HepG2 (cell line): ENCODE measurements at regions of chr12 and their contacts with region 1.

Region 1: DNA sequence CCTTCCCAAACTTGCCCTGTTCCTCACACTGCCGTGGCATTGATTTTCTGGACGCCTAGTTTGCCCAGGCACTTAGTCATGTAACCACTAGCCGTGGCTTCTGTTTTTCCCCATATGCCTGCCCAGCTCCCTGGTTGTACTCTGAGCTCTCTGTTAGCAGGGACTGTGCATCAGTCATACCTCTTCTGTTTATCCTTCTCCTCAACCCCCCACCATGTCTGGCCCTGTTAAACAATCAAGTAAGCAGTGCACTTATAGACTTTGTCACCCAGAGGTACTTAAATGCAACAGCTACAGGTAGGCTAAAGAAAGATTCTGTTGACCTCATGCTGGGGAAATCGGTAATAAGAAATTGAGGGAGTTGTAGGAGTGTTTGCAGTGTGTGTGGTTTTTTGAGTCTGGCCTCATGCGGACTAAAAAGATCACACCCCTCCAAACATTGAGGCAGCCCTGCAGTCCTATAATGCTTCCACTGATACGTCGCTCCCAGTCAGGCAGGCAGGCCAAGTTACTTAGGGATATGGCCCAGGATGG is 17.0 kb downstream of the UBE3B start:
- DNase-seq: peak; percentile 93
- ATAC-seq: peak; percentile 100
- H3K4me3 ChIP-seq: peak overlapping the region in 1 of 3 experiments; percentile 41; a peak in 1 of 6 replicates
- H3K27ac ChIP-seq: peak overlapping the region; percentile 77
- H3K4me1 ChIP-seq: peaks cover 26% of the 10 kb centered on the region
- H3K27me3 ChIP-seq: no peaks in the 10 kb centered on the region
- CTCF ChIP-seq: 0 out of 2 replicates have a peak, but pooled peaks have one; percentile 5
- EP300 ChIP-seq: peak in 1 of 2 experiments; percentile 66; a peak in 2 of 4 replicates
- POLR2A ChIP-seq: no peak
- RAD21 ChIP-seq: no peak

Region 2: GRCh38 chr12:109428037-109428629 is 66.3 kb before region 1 on chr12:
- CTCF ChIA-PET with region 1: no interaction called
- POLR2A ChIA-PET with region 1: no interaction called
- in situ Hi-C with region 1: no loop called
- intact Hi-C with region 1: loop called (anchors 1 kb)
- DNase-seq: peak; percentile 62
- ATAC-seq: peak; percentile 84
- H3K4me3 ChIP-seq: no peak overlapping the region
- H3K27ac ChIP-seq: no peak overlapping the region
- H3K4me1 ChIP-seq: peaks cover 15% of the 10 kb centered on the region
- H3K27me3 ChIP-seq: no peaks in the 10 kb centered on the region; a peak in 1 of 5 replicates
- CTCF ChIP-seq: peak; percentile 90
- EP300 ChIP-seq: no peak
- POLR2A ChIP-seq: no peak
- RAD21 ChIP-seq: peak; percentile 61

Region 3: GRCh38 chr12:109440851-109441493 is 53.4 kb before region 1 on chr12:
- CTCF ChIA-PET with region 1: no interaction called
- POLR2A ChIA-PET with region 1: no interaction called
- in situ Hi-C with region 1: no loop called
- intact Hi-C with region 1: no loop called
- DNase-seq: no peak
- ATAC-seq: no peak
- H3K4me3 ChIP-seq: no peak overlapping the region
- H3K27ac ChIP-seq: no peak overlapping the region
- H3K4me1 ChIP-seq: no peaks in the 10 kb centered on the region
- H3K27me3 ChIP-seq: no peaks in the 10 kb centered on the region
- CTCF ChIP-seq: no peak
- EP300 ChIP-seq: no peak
- POLR2A ChIP-seq: no peak
- RAD21 ChIP-seq: no peak

Region 4: DNA sequence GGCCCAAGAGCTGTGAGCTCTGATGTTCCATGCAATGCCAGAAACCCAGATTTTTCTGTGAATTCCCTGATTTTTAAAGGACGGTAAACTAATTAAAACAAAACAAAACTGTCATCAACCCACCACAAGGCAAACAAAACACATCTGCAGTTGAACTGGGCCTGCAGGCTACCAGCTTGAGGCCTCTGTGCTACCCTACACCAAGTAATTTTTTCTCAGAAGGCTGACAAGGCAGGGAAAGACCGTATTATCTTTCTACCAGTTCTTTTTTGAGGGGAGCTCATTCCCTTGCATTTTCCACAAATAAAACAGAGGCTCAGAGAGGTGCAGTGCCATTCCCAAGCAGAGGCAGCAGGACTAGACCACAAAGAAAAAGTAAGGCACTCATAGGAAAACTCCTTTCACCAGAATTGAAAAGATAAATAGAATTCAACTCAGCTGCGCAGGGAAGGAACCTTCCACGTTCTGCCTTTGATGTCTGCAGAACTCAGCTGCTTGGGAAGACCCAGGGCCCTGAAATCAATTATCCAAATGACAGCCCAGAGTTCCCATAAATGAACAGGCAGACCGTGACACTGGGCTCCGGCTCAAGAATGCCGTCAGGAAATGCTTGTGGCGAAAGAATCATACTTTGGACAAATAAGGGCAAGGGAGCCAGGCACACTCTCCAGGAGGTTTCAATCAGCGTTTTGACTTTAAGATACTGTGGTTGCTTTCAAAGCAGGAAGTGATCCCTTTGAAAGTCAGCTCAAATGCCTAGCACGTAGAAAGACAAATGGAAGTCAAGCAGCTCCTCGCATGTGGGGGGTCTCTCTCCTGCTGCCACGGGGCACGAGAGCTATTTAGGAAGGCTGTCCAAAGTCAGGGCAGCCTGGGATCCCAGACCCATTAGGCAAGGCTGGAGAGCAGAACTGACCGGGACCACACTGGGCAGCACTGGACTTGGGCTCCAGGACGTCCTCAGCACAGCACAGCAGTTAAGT is 31.4 kb before region 1 on chr12:
- CTCF ChIA-PET with region 1: no interaction called
- POLR2A ChIA-PET with region 1: interaction called, 11 read pairs
- in situ Hi-C with region 1: no loop called
- intact Hi-C with region 1: no loop called
- DNase-seq: peak; percentile 63
- ATAC-seq: peak; percentile 47
- H3K4me3 ChIP-seq: no peak overlapping the region
- H3K27ac ChIP-seq: peak overlapping the region; percentile 38
- H3K4me1 ChIP-seq: peaks cover 39% of the 10 kb centered on the region
- H3K27me3 ChIP-seq: no peaks in the 10 kb centered on the region
- CTCF ChIP-seq: no peak
- EP300 ChIP-seq: no peak
- POLR2A ChIP-seq: no peak
- RAD21 ChIP-seq: no peak

Region 5: DNA sequence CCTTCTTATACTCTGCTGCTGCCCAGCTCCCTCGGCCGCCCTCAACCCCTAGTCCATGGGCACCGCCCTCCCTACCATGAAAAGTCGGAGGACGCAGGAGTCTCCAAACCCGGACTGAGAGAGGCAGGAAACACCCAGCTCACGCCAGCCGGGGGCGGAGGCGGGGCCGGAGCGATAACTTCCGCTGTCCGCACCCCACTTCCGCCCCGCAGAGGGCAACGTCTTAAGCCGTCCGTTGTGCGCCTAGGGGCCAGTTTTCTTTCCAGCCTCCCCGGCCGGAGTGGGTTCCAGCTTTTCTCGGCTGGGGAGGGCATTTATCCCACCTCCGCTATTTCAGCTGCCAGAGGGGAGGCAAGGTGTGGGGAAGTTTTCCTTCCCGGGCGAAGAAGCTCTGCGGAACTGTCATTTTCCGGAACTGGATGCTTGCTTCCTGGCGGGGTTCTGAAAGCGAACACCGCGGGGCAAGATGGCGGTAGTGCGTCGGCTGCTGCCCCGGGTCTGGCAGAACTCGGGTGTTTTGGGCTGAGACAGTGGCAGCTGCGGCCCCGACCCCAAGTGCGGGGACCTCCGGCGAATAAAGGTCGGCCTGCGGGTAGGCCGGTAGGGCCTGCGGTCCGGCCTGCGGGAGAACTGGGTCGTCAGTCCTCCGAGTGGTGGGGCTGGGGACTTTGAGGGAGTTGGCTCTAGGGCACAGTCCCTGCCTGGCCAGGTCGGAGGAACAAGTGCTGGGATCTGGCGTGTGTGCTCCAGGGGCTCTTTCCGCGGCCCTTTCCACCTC is 17.0 kb before region 1 on chr12 and contains the starts of genes KCTD10 and UBE3B:
- CTCF ChIA-PET with region 1: no interaction called
- POLR2A ChIA-PET with region 1: interaction called, 18 read pairs
- in situ Hi-C with region 1: no loop called
- intact Hi-C with region 1: loop called (anchors 2 kb)
- DNase-seq: peak; percentile 72
- ATAC-seq: peak; percentile 96
- H3K4me3 ChIP-seq: peak within 1 kb of the TSS; percentile 95 to 98 (median 95)
- H3K27ac ChIP-seq: peak within 1 kb of the TSS; percentile 94
- H3K4me1 ChIP-seq: peaks cover 39% of the 10 kb centered on the region
- H3K27me3 ChIP-seq: no peaks in the 10 kb centered on the region; a peak in 1 of 5 replicates
- CTCF ChIP-seq: peak; percentile 12; the same call in 1 of the 2 replicates
- EP300 ChIP-seq: no peak
- POLR2A ChIP-seq: peak; percentile 67 to 71
- RAD21 ChIP-seq: no peak
- total RNA-seq, gene KCTD10: 6.9 and 12.5 TPM in 2 replicates
- total RNA-seq, gene UBE3B: 25.3 and 31.5 TPM in 2 replicates

Region 6: DNA sequence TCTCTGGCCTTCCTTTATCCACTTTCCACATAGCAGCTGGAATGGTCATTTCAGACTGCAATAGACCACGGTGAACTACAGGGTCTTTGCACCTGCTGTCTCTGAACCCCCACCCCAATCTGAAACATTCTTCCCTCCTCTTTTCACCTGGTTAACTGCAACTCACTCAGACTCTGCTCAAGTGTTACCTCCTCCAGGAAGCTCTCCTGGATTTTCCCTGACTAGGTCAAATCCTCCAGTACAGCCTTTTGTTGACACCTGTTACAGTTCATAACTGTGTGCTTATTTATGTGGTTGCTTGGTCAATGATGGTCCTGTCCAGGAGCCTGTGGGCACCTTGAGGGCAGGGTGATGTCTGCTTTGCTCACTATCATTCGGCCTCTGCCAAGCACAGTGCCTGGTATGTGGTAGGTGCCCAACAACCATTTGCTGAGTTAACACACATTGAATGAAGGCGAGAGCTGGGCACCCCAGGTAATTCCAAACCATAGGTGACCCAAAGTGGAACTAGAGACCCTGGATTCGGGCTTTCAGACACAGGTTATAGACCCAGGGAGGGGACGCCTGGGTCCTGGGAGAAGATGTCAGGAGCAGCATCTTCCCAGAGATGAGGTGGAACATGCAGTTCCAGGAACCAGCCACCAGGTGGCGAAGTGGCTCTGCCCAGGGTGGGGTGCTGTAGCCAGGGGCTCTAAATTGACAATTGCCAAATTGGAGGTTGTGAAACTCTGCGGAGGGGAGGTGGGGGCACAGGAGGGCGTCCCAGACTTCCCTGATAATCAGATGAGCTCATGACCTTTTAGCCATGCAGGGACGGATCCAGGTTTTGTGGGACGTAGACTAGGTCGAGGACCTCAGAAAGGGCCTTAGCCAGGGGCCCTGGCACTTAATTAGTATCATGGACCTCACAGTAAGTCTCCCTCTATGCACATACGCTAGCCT is 310.7 kb after region 1 on chr12:
- CTCF ChIA-PET with region 1: no interaction called
- POLR2A ChIA-PET with region 1: no interaction called
- in situ Hi-C with region 1: no loop called
- intact Hi-C with region 1: no loop called
- DNase-seq: peak; percentile 45
- ATAC-seq: peak; percentile 84
- H3K4me3 ChIP-seq: no peak overlapping the region; a peak in 1 of 6 replicates
- H3K27ac ChIP-seq: no peak overlapping the region
- H3K4me1 ChIP-seq: peaks cover 5% of the 10 kb centered on the region; the same call in 1 of the 2 replicates
- H3K27me3 ChIP-seq: no peaks in the 10 kb centered on the region
- CTCF ChIP-seq: peak; percentile 94
- EP300 ChIP-seq: no peak
- POLR2A ChIP-seq: no peak
- RAD21 ChIP-seq: peak; percentile 91